ENCODE measurements at regions of chr15 and their contacts with region 1.

Region 1: GRCh38 chr15:101277038-101277882 is at the start of gene SELENOS:
- DNase-seq: peak; percentile 98
- H3K4me3 Mint-ChIP-seq: peak within 1 kb of the TSS; percentile 92
- H3K27ac Mint-ChIP-seq: peak within 1 kb of the TSS; percentile 85
- H3K4me1 Mint-ChIP-seq: peaks cover 24% of the 10 kb centered on the region
- H3K27me3 Mint-ChIP-seq: no peaks in the 10 kb centered on the region
- total RNA-seq, gene SELENOS: 36.5 and 39.3 TPM in 2 replicates

Region 2: DNA sequence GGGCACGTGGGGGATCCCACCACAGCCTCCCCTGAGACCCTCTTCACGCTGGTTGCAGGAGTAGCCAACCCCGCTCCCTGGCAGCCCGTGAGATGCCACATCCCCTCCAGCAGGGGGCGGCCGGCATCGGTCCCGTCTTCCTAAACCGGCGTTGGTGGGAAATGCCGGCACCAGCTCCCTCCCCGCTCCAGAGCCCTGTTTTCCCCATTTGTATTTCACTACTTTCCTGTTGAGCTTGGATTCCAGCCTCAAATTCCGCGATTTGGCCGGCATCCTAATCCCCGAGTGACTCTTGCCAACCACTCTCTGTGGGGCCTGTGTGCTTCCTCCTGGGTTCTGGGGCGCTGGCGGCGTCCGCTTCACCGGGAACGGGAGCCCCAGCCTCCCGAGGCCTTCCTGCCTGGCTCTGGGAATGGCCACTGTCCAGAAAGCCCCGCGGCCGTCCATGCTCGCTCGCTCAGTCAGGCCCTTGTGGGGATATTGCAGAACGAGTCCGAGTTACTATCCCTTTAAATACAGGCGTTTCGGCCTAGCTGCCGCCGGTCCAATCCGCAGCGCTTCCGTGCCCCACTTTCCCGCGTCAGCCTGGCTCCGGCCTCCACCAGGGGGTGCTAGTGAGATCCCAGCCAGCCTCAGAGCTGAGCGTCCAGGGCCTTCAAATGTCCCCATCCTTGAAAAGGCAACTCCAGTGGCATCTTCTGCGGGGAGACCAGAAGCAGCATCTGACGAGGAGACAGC is 927.4 kb before region 1 on chr15:
- intact Hi-C with region 1: loop called (anchors 10 kb)
- DNase-seq: peak; percentile 97
- H3K4me3 Mint-ChIP-seq: peak overlapping the region; percentile 93
- H3K27ac Mint-ChIP-seq: peak overlapping the region; percentile 84
- H3K4me1 Mint-ChIP-seq: peaks cover 9% of the 10 kb centered on the region
- H3K27me3 Mint-ChIP-seq: peaks cover 20% of the 10 kb centered on the region

Region 3: DNA sequence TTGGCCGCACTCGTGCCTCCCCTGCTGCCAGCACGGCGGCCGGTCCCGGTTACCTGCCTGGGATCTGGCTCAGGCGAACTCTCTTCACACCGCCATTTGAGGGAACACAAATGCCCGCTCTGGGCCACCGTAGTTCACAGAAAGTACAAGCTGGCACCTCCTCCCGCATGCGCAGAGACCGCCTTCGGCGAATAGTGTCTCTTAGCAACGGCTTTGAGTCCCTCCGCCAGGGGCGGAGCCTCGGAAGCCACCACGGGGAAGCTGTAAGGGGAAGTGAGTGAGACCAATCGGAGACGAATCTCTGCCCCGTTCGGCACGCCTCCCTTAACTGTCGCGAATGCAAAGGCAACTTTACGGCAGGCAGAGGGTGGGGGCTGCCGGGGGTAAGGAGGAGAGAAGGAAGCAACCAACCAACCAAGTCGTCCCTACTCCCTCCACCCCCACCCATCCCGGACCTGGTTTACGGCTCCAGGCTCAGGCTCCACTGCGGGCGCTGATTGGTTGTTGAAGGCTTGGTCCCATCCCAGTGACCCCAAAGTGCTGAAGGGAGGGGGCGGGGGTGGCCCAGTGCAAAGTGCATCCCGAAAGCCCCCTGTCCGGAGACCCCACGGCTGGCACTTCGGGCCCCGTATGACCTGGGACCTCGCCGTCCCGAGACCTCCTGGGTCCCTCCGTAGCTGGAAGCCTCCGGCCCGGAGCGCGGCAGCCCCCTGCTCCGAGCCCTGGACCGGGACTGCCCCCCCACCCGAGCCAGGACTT is 675.0 kb before region 1 on chr15 and contains the starts of genes ASB7 and LINS1:
- intact Hi-C with region 1: loop called (anchors 5 kb)
- DNase-seq: peak; percentile 100
- H3K4me3 Mint-ChIP-seq: no peak within 1 kb of the TSS
- H3K27ac Mint-ChIP-seq: no peak within 1 kb of the TSS
- H3K4me1 Mint-ChIP-seq: peaks cover 54% of the 10 kb centered on the region
- H3K27me3 Mint-ChIP-seq: no peaks in the 10 kb centered on the region
- total RNA-seq, gene ASB7: 17.8 and 18.0 TPM in 2 replicates
- total RNA-seq, gene LINS1: 63.9 and 64.9 TPM in 2 replicates

Region 4: DNA sequence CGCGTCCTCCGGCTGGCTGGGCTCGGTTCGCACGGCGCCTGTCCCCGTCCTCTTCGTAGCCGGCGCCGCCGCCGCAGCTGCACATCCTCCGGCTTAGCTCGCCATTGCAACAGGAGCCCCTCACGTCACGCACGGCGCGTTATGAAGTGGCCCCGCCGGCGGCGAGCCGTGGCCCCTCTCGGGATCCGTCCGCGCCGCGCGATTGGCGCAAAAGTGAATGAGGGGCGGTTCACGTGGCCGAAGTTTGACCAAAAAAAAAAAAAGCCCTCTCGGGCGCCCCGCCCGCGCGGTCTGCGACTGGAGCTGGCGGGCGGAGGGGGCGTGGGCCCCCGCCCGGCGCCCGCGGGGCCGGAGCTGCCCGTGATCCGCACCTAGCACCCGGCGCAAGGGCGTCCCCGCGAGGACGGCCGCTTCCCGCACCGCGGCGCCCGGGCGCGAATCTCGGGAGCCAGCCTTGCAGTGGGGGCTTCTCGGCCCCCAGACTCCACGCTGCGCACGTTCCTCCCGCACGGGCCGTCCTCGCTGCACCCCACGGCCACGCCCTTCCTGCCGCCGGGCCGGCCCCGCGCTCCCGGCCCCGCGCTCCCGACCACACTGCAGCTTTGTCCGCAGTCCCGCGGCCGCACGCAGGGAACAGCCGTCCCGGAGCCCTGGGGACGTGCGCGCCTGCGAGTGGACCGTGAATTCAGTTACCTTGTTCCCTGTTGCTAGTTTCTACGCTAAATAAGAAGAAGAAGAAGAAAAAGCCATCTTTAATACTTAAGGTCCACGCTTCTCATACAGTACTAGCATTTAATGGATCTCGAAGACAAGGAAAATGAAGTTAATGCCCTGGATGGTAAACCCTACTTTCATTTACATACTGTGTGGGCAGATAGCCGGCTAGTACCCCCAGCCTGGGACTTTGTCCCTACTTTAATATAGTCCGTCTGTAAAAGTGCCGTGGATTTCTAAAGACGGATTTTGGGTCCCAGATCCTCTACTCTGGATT is 25.1 kb before region 1 on chr15 and contains the start of gene CHSY1:
- intact Hi-C with region 1: loop called (anchors 1 kb)
- DNase-seq: peak; percentile 97
- H3K4me3 Mint-ChIP-seq: peak within 1 kb of the TSS; percentile 91
- H3K27ac Mint-ChIP-seq: peak within 1 kb of the TSS; percentile 93
- H3K4me1 Mint-ChIP-seq: peaks cover 57% of the 10 kb centered on the region
- H3K27me3 Mint-ChIP-seq: no peaks in the 10 kb centered on the region
- total RNA-seq, gene CHSY1: 61.7 and 62.6 TPM in 2 replicates

Region 5: DNA sequence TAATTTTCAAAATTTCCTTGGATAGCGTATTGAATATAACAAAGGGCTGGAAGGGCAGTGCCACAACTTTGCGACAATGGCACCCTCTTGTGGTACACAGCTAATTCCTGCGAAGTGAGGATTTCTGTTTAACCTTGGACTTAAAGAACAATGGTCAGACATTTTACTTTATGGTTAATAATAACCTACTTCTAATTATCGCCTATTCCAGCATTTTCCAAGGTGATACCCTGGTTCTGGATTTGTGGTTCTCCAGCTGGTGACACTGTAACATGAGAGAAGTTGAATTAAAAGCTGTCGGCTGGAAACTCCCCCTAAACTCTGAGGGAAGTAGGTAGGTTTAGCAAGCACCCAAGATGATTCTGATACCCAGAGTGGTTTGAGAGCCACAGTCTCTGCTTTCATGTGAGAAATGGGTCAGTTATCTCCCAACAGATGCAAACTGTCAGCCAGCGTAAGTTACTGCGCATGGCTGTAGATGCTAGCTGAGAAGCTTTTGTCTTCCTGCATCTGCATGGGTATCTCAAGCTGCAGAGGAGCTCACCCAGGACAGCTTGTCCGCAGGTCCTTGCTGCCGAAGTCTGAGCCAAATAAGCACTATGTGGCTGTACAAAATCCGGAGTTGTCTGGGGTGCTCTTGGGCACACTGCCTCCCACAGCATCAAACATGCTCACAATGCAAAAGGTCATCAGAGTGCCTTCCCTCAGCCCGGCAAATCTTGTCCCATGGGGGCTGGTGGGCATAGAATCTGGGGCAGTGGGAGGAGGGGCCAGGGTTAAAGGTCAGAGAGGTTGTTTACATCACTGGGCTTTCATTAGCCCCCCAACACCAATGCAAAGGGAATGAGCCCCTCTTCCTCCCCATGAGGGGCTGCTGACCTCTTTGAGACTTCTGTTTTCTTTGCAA is 18.8 kb before region 1 on chr15:
- intact Hi-C with region 1: loop called (anchors 2 kb)
- DNase-seq: peak; percentile 87
- H3K4me3 Mint-ChIP-seq: no peak overlapping the region
- H3K27ac Mint-ChIP-seq: no peak overlapping the region
- H3K4me1 Mint-ChIP-seq: peaks cover 25% of the 10 kb centered on the region
- H3K27me3 Mint-ChIP-seq: peaks cover 19% of the 10 kb centered on the region

Region 6: GRCh38 chr15:101288908-101289513 is 11.8 kb after region 1 on chr15:
- intact Hi-C with region 1: loop called (anchors 1 kb)
- DNase-seq: peak; percentile 80
- H3K4me3 Mint-ChIP-seq: no peak overlapping the region
- H3K27ac Mint-ChIP-seq: peak overlapping the region; percentile 25
- H3K4me1 Mint-ChIP-seq: peaks cover 41% of the 10 kb centered on the region
- H3K27me3 Mint-ChIP-seq: no peaks in the 10 kb centered on the region

Region 7: GRCh38 chr15:101342056-101342455 is 64.8 kb after region 1 on chr15:
- intact Hi-C with region 1: no loop called
- DNase-seq: no peak
- H3K4me3 Mint-ChIP-seq: no peak overlapping the region
- H3K27ac Mint-ChIP-seq: no peak overlapping the region
- H3K4me1 Mint-ChIP-seq: no peaks in the 10 kb centered on the region
- H3K27me3 Mint-ChIP-seq: peaks cover 38% of the 10 kb centered on the region

Measured in activated CD4-positive, alpha-beta T cell treated with anti-CD3 and anti-CD28 coated beads, Interleukin-2, amount 10 ng/mL, durations not matched to agents 24 days and 14 days (primary cell).